Activated B cell treated with CpG ODN at 0.5 μM for 24 hours (primary cell): ENCODE measurements at regions of chr3 and their contacts with region 1.

Region 1: DNA sequence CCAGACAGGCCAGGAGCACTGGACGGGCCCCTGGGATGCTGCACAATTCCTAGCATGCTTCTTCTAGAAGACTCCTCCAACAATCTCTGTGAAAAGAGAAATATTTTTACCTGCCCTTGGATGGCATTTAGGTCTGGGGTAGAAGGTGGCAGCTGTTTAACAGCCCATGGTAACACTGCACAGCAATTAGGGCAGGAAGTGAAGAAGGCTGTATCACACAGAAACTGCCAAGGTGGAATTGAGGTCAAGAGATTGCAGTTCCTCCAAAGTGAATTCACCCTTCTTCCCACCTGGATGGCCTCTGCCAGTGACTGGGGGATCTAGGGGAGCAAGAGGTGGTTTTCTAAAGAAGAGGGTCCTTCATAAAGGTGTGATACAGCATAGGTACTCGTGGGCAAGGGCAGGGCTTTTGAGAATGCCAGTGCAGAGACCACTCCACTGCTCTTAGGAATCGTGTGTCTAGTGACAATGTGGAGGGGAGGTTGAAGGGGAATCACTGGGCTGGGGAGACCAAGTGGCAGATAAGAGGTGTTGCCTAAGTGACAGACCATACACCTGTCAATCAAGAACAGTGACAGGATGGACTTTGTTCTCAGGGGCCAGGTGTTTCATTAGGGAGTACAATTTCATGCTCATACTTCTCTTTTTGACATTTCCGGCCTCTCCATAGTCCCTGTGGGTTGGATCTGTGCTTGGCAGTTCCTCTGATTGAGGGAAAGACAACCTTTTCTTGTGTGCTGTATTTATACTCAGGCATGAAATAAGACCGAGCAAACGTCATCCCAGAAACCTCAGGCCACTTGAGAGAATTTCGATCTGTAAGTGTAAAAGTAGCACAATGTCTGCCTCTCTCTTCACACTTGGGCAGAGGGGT is 83.5 kb upstream of the BCL6 start:
- DNase-seq: no peak
- ATAC-seq: no peak
- H3K4me3 Mint-ChIP-seq: no peak overlapping the region
- H3K27ac Mint-ChIP-seq: no peak overlapping the region
- H3K4me1 Mint-ChIP-seq: peaks cover 7% of the 10 kb centered on the region
- H3K27me3 Mint-ChIP-seq: no peaks in the 10 kb centered on the region
- CTCF ChIP-seq: no peak

Region 2: DNA sequence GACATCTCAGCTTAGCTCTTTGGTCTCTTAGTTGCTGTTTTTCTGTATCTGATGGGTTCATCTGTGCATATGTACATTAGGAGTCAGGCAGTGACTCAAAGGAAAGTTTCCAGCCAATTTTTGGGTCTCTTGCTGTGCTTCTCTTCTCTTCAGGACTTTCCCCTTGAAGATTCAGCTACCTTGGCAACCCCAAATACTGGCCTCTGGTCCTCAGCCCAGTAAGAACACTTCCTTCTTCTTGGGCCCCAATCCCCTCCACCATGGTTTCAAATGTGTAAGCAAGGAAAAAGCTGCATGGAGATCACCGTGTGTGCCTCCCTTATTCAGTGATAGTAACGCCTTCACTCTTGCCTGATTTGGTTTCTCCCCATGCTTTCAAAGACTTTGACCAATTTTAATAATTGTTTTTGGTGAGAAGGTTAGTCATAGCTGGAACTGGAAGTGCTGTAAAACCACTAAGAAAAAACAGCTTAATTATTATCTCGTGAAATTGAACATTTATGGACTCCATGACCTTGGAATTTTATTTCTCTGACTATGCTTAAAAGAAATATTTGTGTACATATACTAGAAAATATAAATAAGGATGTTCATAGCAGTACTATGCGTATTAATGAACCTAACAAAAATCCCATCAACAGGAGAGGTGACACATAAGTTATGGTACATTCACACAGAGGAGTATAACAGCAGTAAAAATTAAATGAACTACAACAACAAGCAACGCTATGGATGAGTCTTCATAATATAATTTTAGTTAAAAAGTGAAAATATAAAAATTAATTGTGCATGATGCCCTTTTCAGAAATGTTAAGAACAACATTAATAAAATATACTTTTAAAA is 41.8 kb after region 1 on chr3:
- CTCF ChIA-PET with region 1: no interaction called
- POLR2A ChIA-PET with region 1: no interaction called
- intact Hi-C with region 1: loop called (anchors 5 kb)
- DNase-seq: no peak
- ATAC-seq: peak; percentile 18
- H3K4me3 Mint-ChIP-seq: no peak overlapping the region
- H3K27ac Mint-ChIP-seq: no peak overlapping the region
- H3K4me1 Mint-ChIP-seq: no peaks in the 10 kb centered on the region
- H3K27me3 Mint-ChIP-seq: no peaks in the 10 kb centered on the region
- CTCF ChIP-seq: no peak

Region 3: GRCh38 chr3:187913617-187914291 is 84.9 kb after region 1 on chr3:
- CTCF ChIA-PET with region 1: no interaction called
- POLR2A ChIA-PET with region 1: no interaction called
- intact Hi-C with region 1: no loop called
- DNase-seq: no peak
- ATAC-seq: no peak
- H3K4me3 Mint-ChIP-seq: no peak overlapping the region
- H3K27ac Mint-ChIP-seq: no peak overlapping the region
- H3K4me1 Mint-ChIP-seq: peaks cover 7% of the 10 kb centered on the region
- H3K27me3 Mint-ChIP-seq: peaks cover 8% of the 10 kb centered on the region
- CTCF ChIP-seq: no peak